ENCODE measurements at regions of chr1 and their contacts with region 1.

Region 1: GRCh38 chr1:66996018-66996682 is 57.8 kb downstream of the SLC35D1 start:
- DNase-seq: peak; percentile 63
- ATAC-seq: peak; percentile 77
- H3K4me3 Mint-ChIP-seq: no peak overlapping the region
- H3K27ac Mint-ChIP-seq: no peak overlapping the region
- H3K4me1 Mint-ChIP-seq: no peaks in the 10 kb centered on the region
- H3K27me3 Mint-ChIP-seq: no peaks in the 10 kb centered on the region
- CTCF ChIP-seq: 0 out of 2 replicates have a peak, but pooled peaks have one; percentile 42

Region 2: DNA sequence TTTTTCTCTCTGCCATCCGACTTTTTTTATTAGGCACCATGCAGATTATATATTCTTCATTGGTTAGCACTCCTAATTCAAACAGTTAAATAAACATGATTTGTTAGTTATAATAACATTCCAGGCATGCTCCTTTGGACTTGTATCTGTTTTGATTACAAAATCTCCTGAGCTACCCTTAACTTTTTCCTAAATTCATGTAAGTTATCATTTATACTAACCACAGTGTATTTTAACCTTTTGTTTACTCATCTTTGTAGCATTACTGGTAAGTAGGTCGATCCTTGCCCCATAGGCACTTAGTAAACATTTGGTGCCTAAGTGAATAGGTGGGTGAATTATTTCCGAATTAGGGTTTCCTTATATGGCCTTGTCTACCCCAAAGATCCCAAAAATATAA is 27.6 kb before region 1 on chr1:
- CTCF ChIA-PET with region 1: no interaction called
- POLR2A ChIA-PET with region 1: no interaction called
- DNase-seq: no peak
- ATAC-seq: no peak
- H3K4me3 Mint-ChIP-seq: no peak overlapping the region
- H3K27ac Mint-ChIP-seq: no peak overlapping the region
- H3K4me1 Mint-ChIP-seq: no peaks in the 10 kb centered on the region
- H3K27me3 Mint-ChIP-seq: no peaks in the 10 kb centered on the region
- CTCF ChIP-seq: no peak

Region 3: GRCh38 chr1:67019600-67020136 is 23.5 kb after region 1 on chr1:
- CTCF ChIA-PET with region 1: interaction called, 13 read pairs
- POLR2A ChIA-PET with region 1: no interaction called
- DNase-seq: no peak
- ATAC-seq: peak; percentile 85
- H3K4me3 Mint-ChIP-seq: no peak overlapping the region
- H3K27ac Mint-ChIP-seq: peak overlapping the region; percentile 30; the same call in 1 of the 2 replicates
- H3K4me1 Mint-ChIP-seq: peaks cover 29% of the 10 kb centered on the region
- H3K27me3 Mint-ChIP-seq: peaks cover 25% of the 10 kb centered on the region
- CTCF ChIP-seq: no peak

Region 4: DNA sequence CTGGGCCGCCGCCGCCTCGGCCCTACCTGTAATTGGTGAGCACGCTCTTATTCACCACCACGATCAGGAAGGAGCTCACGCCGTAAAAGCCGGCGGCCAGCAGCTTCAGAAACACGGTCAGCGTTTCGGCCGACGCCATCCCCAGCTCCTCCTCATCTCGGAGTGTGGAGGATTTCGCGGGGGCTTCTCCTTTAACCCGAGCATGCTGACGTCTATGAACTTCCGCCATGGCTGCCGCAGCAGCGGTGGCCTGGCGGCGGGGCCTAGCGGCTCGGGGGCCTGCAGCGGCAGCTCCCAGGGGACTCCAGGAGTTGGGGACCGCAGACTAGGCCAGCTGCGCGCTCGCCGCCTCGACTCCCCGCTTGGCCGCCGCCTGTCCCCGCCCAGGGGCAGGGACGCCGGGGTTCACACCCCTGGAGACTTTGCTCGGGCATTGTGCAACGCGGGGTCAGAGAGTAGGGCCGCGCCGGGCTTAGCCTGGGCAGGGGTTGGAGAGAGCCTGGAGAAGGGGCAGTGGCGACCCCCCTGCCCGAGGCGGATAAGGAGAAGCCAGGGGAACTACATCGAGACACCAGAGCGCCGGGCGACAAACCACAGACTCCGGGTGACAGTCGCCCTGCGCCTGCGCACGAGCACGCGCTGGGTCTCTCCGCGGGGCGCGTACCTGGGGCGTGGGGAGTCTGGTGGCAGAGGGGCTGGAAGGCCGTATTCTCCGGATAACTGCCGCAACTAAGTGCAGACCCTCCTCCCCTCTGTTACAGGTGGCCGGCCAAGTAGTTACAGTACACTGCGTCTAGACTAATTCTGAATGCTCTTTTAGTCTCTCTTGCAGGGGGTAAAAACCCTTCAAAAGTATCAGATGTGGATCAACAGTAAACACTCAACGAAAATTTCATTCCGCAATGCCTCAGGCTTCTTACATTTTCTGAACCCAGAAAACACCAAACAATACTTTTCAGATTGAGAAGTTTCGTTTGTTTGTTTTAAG is 57.9 kb after region 1 on chr1 and contains the start of gene SLC35D1:
- CTCF ChIA-PET with region 1: interaction called, 10 read pairs
- POLR2A ChIA-PET with region 1: interaction called, 5 read pairs
- DNase-seq: peak; percentile 89
- ATAC-seq: peak; percentile 83
- H3K4me3 Mint-ChIP-seq: peak within 1 kb of the TSS; percentile 81
- H3K27ac Mint-ChIP-seq: peak within 1 kb of the TSS; percentile 63; the same call in 1 of the 2 replicates
- H3K4me1 Mint-ChIP-seq: peaks cover 26% of the 10 kb centered on the region
- H3K27me3 Mint-ChIP-seq: peaks cover 7% of the 10 kb centered on the region
- CTCF ChIP-seq: no peak
- total RNA-seq, gene SLC35D1: 2.4 to 3.0 TPM (median 2.6 TPM) in 3 replicates

Region 5: DNA sequence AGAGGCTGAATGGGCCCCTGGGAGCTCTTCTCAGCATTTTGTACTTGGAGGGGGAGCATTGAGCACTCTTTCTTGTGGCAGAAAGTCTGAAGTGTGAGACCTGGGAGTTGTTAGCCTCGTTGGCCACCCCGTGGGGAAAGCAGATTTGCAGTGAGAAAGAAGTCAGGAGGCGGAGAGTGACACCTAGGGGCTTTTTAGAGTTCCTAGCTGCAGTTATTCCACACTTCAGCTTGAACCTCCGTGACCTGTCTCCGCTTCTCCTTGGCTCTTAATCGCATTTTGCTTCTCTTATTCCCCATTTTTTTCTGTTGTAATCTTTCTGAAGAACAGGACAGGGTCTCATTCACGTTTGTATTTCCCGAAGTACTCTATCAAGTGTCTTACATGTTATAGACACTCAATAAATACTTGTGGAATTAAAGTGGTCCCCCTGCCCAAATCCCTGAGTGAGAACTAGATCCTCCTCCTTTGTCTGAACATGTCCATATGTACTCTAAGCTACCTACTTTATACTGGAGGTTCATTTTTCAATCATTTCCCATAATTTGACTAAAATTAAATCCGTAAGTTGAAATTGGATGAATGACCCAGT is 153.1 kb after region 1 on chr1:
- CTCF ChIA-PET with region 1: interaction called, 96 read pairs
- POLR2A ChIA-PET with region 1: interaction called, 4 read pairs
- DNase-seq: peak; percentile 67
- ATAC-seq: peak; percentile 96
- H3K4me3 Mint-ChIP-seq: no peak overlapping the region
- H3K27ac Mint-ChIP-seq: no peak overlapping the region
- H3K4me1 Mint-ChIP-seq: peaks cover 8% of the 10 kb centered on the region
- H3K27me3 Mint-ChIP-seq: peaks cover 7% of the 10 kb centered on the region; the same call in 1 of the 2 replicates
- CTCF ChIP-seq: peak; percentile 41; the same call in 1 of the 2 replicates